PC-9 (cell line): ENCODE measurements at regions of chr10 and their contacts with region 1.

Region 1: DNA sequence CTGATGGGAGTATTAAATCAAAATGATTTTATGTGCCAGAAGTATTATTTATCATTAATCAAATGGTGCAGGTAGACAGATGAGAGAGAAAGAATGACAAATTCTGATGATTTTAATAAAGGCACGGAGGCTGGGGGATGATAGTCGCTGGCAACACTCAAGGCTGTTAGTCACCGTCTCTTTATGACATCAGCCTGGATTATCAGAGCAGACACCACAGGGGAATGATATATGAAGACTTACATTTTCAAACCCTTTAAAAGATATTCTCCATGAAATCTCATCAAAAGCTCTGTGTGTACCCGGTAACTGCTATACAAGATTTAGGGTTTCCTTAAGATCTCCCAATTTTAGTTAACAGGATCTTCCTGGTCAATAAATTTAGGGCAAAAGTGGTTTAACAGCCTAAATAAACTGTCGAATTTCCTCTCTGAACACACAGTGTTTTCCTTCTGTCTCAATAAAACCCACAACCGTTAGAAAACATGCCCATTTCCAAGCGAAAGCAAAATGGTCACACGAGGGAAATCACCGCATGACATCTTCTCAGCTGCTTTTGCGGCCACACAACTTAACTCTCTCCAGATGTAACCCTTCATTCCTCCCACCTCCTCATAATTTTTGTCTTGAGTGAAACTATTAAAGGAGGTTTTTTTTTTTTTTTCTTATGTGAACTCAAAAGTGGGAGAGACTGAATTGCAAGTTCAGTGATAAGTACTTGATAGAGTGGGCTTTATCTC is 133.2 kb upstream of the FAM171A1 start:
- DNase-seq: no peak
- H3K4me3 ChIP-seq: no peak overlapping the region
- H3K27ac ChIP-seq: no peak overlapping the region
- H3K4me1 ChIP-seq: no peaks in the 10 kb centered on the region
- H3K27me3 ChIP-seq: peaks cover 5% of the 10 kb centered on the region; the same call in 1 of the 2 replicates
- CTCF ChIP-seq: no peak

Region 2: GRCh38 chr10:14220026-14220425 is 1284.2 kb before region 1 on chr10:
- CTCF ChIA-PET with region 1: no interaction called
- POLR2A ChIA-PET with region 1: interaction called, 35 read pairs
- intact Hi-C with region 1: no loop called
- DNase-seq: no peak
- H3K4me3 ChIP-seq: no peak overlapping the region
- H3K27ac ChIP-seq: no peak overlapping the region
- H3K4me1 ChIP-seq: no peaks in the 10 kb centered on the region
- H3K27me3 ChIP-seq: peaks cover 65% of the 10 kb centered on the region
- CTCF ChIP-seq: no peak